ENCODE measurements at regions of chrX and their contacts with region 1.

Region 1: GRCh38 chrX:150772150-150772970 is 79.2 kb downstream of the MTMR1 start:
- DNase-seq: peak; percentile 88
- ATAC-seq: peak; percentile 86

Region 2: GRCh38 chrX:150898343-150899190 is 126.2 kb after region 1 on chrX and contains the start of gene CD99L2:
- intact Hi-C with region 1: loop called (anchors 10 kb)
- DNase-seq: peak; percentile 95
- ATAC-seq: peak; percentile 99
- total RNA-seq, gene CD99L2: 81.4 TPM

Region 3: DNA sequence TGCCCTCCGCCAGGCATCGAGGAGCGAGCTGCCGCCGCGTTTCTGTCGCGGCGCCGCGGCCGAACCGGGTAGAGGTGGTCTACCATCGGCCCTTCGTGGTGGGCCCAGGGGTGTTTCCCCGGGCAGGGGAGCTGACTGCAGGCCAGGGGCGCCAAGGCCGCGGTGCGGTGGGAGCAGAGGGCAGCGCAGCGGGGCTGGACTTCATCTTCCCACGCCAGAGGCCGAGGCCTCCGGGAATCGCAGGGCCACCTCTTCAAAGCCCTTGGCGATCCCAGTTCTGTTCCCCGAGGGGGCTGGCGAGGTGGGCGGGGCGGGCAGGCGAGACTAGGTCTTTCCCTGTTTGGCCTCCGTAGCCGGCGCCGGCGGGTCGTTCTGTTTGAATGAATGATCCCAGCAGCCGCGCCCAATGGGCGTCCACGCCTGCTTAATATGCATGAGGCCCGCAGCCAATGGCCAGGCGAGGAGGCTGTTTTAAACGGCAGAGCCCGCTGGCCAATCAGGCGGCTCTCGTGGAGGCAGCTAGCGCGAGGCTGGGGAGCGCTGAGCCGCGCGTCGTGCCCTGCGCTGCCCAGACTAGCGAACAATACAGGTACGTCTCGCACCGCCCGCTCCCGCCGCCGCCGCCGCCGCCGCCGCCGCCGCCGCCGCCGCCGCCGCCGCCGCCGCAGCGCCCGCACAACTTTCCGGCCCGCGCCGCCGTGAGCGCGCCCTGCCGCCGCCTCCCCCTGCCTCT is 210.6 kb after region 1 on chrX and contains the start of gene HMGB3:
- intact Hi-C with region 1: loop called (anchors 10 kb)
- DNase-seq: peak; percentile 95
- ATAC-seq: peak; percentile 93
- total RNA-seq, gene HMGB3: 7.8 TPM

Region 4: GRCh38 chrX:151004082-151004481 is 231.7 kb after region 1 on chrX:
- intact Hi-C with region 1: loop called (anchors 5 kb)
- DNase-seq: no peak
- ATAC-seq: no peak

Region 5: DNA sequence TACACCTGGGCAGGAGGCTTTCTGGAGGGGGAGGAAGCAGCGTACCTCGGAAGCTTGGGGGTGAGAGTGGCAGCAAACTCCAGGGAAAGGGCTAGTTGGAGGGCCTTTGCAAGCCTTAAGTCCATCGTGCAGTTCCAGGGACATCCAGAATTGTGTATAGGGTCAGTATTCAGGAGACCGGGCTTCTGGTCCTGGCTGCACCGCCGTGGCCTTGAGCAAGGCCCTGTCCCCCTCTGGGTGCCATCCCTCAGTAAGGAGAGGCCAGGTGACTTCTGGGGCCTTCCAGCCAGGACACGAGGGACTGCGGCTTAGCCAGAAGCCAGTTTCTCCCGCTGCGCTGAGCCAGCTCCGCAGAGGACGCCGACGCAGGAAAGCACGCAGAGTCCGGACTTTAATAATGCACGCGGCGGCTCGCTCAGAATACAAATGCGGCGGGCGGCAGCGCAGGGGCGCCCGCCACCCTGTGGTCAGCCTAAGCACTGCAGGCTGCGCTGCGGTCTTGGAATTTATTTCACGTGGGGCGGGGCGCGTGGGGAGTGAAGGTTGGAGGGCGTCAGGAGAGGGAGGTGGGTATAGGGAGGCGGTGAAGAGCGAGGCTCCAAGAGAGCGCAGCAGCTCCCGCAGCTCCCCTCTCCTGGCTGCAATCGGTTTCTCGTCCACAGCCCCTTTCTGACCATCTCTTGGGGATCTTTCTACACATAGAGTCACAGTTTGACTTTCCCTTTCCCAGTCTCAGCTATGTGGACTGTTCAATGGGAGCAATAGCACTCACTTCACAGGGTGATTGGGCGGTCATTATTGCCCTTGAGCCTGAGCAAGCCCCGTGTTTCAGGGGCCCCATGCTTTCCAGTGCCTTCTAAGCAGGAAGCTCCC is 310.0 kb after region 1 on chrX:
- intact Hi-C with region 1: loop called (anchors 1 kb)
- DNase-seq: peak; percentile 77
- ATAC-seq: peak; percentile 86